ENCODE measurements at regions of chr14 and their contacts with region 1.

Region 1: DNA sequence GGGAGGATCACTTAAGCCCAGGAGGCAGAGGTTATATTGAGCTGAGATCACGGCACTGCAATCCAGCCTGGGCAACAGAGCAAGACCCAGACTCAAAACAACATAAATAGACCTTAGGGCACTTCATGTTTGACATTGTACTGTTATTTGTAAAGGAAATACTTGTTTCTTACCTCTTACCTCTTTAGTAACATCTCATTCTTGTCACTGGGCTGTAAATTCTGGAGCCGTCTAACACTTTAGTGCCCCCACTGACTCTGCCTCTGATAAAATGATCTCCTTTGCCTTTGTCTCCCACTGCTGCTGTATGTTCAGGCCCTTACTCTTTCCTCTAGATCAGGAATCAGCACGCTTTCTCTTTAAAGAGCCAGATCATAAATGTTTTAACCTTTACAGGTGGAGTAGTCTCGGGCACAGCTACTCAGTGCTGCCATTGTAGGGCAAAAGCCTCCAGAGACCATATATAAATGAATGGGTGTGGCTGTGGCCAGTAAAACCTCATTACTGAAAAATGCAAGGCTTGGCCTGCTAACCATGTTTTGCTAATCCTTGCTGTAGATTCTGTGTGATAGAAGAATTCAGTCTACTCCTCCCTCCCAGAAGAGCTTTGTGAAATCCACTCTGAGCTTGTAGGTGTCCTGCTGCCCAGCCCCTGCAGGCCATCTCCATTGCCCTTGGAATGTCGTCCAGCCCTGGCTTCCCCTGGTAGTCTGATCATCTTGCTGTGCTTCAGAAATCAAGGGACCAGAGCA is 58.2 kb downstream of the HSP90AA1 start:
- DNase-seq: peak; percentile 91 to 100
- H3K4me3 ChIP-seq: peak overlapping the region; percentile 24; the same call in 1 of the 2 replicates
- H3K27ac ChIP-seq: peak overlapping the region; percentile 92
- H3K4me1 ChIP-seq: peaks cover 46% of the 10 kb centered on the region
- H3K27me3 ChIP-seq: no peaks in the 10 kb centered on the region
- CTCF ChIP-seq: no peak; the same call in 1 of the 2 replicates

Region 2: DNA sequence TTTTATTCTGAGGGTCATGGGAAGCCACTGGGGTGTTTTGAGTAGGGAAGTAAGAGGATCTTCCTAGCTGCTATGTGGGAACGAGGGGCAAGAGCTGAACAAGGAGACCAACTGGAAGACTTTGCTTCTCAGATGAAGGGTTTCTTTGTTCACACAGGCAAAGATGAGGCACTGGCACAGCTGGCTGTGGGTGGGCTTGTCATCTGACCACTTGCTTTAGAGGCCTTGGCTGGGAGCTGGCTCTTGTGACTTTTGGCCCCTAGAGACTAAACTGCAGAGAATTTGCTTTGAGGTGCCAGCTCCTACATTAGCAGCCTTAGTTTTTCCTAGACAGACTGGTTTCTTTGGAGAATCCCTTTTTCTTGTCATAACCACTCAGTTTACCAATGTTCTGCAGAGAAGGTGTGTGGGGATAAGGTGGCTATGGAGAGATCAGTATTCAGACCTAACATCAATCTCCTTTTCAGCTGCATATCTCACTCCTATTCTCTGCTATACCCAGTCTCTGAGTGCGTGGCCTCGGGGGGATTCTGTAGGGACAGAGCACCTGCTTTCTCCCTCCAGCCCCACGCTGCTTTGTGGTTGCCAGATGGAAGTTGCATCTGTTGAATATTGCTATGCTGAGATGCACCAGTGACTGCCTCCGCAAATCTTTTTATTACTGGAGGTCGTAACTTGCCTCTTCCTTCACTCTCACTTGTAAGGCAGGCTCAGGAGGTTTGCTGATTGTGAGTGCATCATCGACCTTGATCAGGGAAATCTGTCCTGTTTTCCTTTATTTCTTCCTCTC is 254.4 kb before region 1 on chr14:
- CTCF ChIA-PET with region 1: no interaction called
- POLR2A ChIA-PET with region 1: no interaction called
- intact Hi-C with region 1: loop called (anchors 5 kb)
- DNase-seq: no peak
- H3K4me3 ChIP-seq: no peak overlapping the region
- H3K27ac ChIP-seq: no peak overlapping the region
- H3K4me1 ChIP-seq: peaks cover 37% of the 10 kb centered on the region
- H3K27me3 ChIP-seq: no peaks in the 10 kb centered on the region
- CTCF ChIP-seq: no peak

Region 3: DNA sequence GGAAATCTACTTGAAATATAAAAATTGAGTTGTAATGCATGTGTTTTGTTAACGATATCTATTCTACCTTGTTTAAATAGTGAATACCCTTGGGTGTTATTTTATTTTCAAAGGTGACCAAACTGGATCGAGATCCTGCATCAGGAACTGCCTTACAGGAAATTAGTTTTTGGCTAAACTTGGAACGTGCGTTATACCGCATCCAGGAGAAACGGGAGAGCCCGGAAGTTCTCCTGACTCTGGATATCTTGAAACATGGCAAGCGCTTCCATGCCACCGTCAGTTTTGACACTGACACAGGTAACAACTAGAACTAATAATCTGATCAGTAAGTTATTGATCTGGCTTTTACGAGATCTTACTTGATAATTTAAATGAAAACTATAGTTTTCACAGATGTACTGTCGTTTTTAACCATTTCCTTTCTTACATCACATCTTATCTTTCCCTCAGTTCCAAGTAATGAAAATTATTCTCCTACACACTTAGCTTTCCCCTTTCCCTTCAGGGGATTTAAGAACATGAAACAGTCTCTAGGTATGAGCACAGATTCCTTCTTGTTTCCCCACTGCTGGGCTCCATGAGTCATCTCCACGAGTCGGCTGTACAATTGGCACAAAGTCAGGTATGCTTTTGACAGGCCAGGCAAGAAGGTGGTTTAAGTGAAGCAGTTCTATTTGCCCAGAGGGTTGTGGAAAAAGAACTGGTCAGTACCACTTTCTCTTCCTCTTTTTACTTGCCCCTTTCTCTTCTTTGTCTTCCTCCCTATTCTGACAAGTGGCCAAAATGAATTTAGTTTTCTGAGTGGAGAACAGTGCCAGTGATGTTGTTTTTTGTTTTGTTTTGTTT is 48.1 kb before region 1 on chr14:
- CTCF ChIA-PET with region 1: no interaction called
- POLR2A ChIA-PET with region 1: interaction called, 3 read pairs
- intact Hi-C with region 1: loop called (anchors 1 kb)
- DNase-seq: peak; percentile 95 to 100
- H3K4me3 ChIP-seq: peak overlapping the region; percentile 5; the same call in 1 of the 2 replicates
- H3K27ac ChIP-seq: peak overlapping the region; percentile 88
- H3K4me1 ChIP-seq: peaks cover 54% of the 10 kb centered on the region
- H3K27me3 ChIP-seq: no peaks in the 10 kb centered on the region
- CTCF ChIP-seq: no peak

Region 4: GRCh38 chr14:102046343-102047278 is 18.0 kb after region 1 on chr14:
- CTCF ChIA-PET with region 1: interaction called, 13 read pairs
- POLR2A ChIA-PET with region 1: interaction called, 9 read pairs
- intact Hi-C with region 1: loop called (anchors 1 kb)
- DNase-seq: peak; percentile 98 to 100
- H3K4me3 ChIP-seq: no peak overlapping the region
- H3K27ac ChIP-seq: no peak overlapping the region
- H3K4me1 ChIP-seq: peaks cover 3% of the 10 kb centered on the region
- H3K27me3 ChIP-seq: no peaks in the 10 kb centered on the region
- CTCF ChIP-seq: peak; percentile 84

Region 5: DNA sequence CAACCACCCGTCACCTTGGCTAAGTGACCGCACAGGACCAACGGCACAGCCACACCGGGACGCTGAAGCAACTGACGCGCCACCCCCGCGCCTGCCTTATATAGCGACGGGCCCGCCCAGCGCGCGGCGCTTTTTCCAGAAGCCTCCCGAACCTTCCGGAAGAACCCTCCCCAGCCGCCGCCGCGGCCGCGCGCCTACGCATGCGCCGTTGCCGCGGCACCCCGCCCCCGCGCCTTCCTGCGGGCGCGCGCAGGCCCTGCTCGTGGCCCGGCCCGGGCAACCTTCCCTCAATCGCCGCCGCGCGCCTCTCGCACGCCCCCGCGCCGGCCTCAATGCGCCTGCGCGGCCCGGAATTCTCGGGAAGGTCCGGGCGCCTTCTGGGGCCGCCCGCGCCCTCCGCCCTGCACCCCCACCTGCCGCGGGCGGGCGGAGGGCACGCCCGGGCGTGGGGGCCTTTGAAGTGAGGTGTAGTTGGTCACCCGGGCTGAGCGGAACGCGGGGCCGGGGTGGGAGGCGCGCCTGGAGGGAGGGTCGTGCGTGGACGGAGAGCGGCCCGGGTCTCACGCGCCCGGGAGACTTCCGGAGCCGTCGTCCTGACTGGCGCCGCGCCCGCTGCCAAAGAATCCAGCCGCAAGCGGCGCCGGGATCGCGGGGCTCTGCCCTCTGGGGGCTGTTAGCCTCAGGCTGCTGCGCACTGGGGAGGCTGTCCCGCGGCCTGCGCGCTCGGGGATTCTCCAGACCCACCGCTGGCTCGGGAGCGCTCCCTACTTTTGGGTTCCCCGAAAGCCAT is 58.6 kb after region 1 on chr14 and contains the start of gene HSP90AA1:
- CTCF ChIA-PET with region 1: interaction called, 8 read pairs
- POLR2A ChIA-PET with region 1: no interaction called
- intact Hi-C with region 1: loop called (anchors 2 kb)
- DNase-seq: peak; percentile 88 to 100
- H3K4me3 ChIP-seq: peak within 1 kb of the TSS; percentile 89
- H3K27ac ChIP-seq: peak within 1 kb of the TSS; percentile 82
- H3K4me1 ChIP-seq: peaks cover 41% of the 10 kb centered on the region
- H3K27me3 ChIP-seq: no peaks in the 10 kb centered on the region
- CTCF ChIP-seq: peak; percentile 28; the same call in 1 of the 2 replicates
- total RNA-seq, gene HSP90AA1: 1,314 and 1,931 TPM in 2 replicates

Region 6: DNA sequence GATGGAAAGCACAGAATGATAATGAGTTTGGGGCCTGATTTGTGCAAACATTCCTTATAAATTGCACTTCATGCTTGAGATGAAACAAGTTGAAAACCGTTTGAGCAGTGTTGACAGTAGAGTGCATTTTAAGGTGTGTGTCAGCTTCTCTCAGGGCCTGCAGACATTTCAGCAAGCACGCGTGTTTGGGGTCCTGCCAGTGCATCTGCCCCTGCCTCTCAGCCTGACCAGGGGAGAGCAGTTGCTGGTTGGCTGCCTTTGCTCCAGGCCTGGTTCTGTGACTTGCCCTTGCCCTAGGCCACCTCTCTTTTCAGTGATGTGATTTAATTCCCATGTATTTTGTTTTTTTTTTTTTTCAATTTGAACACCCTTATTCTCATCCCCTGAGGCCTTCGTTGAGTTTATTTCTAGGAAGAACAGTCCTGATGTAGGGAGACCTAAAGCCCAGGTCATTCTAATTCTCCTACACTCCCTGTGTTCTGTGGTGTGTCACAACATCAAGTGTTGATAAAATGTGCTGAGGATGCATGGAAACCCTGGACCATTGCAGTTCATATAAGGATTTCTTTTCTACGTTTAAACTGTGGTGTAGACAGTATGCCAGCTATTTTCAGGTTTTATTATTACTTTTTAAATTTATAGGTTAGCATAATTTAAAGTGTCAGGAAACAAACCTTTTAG is 853.8 kb after region 1 on chr14:
- CTCF ChIA-PET with region 1: no interaction called
- POLR2A ChIA-PET with region 1: no interaction called
- intact Hi-C with region 1: no loop called
- DNase-seq: no peak
- H3K4me3 ChIP-seq: no peak overlapping the region
- H3K27ac ChIP-seq: no peak overlapping the region
- H3K4me1 ChIP-seq: no peaks in the 10 kb centered on the region
- H3K27me3 ChIP-seq: no peaks in the 10 kb centered on the region
- CTCF ChIP-seq: no peak

Measured in PC-9 (cell line).